IMR-90 (cell line): ENCODE measurements at regions of chrX and their contacts with region 1.

Region 1: GRCh38 chrX:120310861-120311726 is at the start of gene TMEM255A:
- DNase-seq: no peak
- ATAC-seq: peak; percentile 24; the same call in 1 of the 2 replicates
- H3K4me3 ChIP-seq: peak within 1 kb of the TSS; percentile 21
- H3K27ac ChIP-seq: no peak within 1 kb of the TSS
- H3K4me1 ChIP-seq: no peaks in the 10 kb centered on the region
- H3K27me3 ChIP-seq: peaks cover 34% of the 10 kb centered on the region
- CTCF ChIP-seq: no peak
- POLR2A ChIP-seq: no peak
- RAD21 ChIP-seq: no peak
- total RNA-seq, gene TMEM255A: not detected in 2 replicates

Region 2: GRCh38 chrX:119455264-119455663 is 855.8 kb before region 1 on chrX:
- CTCF ChIA-PET with region 1: no interaction called
- POLR2A ChIA-PET with region 1: no interaction called
- dilution Hi-C with region 1: no loop called
- in situ Hi-C with region 1: no loop called
- intact Hi-C with region 1: no loop called
- DNase-seq: peak; percentile 69
- ATAC-seq: peak; percentile 27; the same call in 1 of the 2 replicates
- H3K4me3 ChIP-seq: no peak overlapping the region
- H3K27ac ChIP-seq: no peak overlapping the region
- H3K4me1 ChIP-seq: no peaks in the 10 kb centered on the region
- H3K27me3 ChIP-seq: no peaks in the 10 kb centered on the region
- CTCF ChIP-seq: no peak
- POLR2A ChIP-seq: no peak
- RAD21 ChIP-seq: no peak

Region 3: DNA sequence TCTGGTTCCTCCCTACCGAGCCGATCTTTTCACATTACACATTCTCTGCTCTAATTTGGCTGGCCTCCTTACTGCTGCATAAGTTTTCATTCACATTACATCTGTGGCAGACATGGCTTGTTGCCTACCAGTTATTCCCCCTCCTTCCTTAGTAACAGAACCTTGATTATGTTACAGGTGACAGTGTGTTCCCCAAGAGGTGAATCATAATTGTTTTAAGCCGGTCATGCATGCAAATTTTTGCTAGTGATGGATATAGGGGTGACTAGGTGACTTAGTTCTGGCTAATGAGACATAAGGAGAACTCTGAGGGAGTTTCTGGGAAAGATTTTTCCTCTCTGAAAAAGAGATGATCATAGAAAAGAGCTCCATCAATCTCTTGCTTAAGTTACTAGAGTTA is 166.4 kb after region 1 on chrX:
- CTCF ChIA-PET with region 1: no interaction called
- POLR2A ChIA-PET with region 1: no interaction called
- dilution Hi-C with region 1: no loop called
- in situ Hi-C with region 1: no loop called
- intact Hi-C with region 1: loop called (anchors 10 kb)
- DNase-seq: no peak
- ATAC-seq: no peak
- H3K4me3 ChIP-seq: no peak overlapping the region
- H3K27ac ChIP-seq: no peak overlapping the region
- H3K4me1 ChIP-seq: no peaks in the 10 kb centered on the region
- H3K27me3 ChIP-seq: peaks cover 2% of the 10 kb centered on the region; the same call in 1 of the 2 replicates
- CTCF ChIP-seq: no peak
- POLR2A ChIP-seq: no peak
- RAD21 ChIP-seq: no peak